ENCODE measurements at regions of chr1 and their contacts with region 1.

Region 1: DNA sequence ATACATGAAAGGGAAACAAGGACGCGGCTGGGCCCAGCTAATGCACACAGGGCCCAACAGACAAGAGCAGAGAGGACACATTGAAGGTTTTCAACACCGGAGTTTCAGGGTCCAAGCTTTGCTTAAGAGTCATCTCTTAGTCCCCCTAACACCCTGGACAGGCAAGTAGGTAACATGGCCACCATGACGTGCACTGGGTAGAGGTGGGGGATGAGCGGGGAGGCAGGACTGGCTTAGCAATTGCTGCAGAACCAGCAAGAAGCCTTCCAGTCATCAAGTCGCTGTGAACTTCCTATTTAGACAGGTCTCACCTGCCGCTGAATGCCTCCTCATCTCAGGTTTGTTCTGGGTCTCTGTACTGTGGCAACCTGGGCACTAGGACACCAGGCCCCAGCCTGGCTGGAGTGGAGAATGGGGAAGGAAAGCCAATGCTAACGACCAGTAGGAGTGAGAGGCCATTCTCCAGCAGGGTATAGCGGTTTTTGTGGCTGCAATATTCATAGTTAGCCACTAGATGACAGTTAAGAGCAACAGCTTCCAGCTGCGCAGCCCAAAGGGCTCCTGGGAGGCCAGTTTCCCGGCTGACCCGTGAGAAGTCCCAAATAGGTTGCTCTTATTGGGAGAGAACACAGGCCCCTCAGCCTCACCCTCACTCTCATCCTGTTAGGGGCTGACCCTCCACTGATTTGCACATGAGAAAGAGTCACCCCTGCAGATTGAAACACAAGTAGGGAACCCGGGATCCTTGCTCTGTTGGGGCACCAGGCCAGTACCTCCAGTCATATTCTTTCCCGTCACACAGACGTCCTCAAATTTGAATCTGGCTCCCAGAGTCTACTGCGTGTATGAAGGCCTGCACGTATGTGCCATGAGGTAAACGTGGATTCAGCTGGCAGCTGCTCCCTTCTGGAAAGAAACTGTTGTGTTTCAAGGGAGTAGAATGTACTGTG is 6.0 kb upstream of the PIGC start:
- DNase-seq: peak; percentile 30
- H3K4me3 Mint-ChIP-seq: peak overlapping the region; percentile 43
- H3K27ac Mint-ChIP-seq: no peak overlapping the region
- H3K4me1 Mint-ChIP-seq: peaks cover 40% of the 10 kb centered on the region
- H3K27me3 Mint-ChIP-seq: peaks cover 2% of the 10 kb centered on the region

Region 2: DNA sequence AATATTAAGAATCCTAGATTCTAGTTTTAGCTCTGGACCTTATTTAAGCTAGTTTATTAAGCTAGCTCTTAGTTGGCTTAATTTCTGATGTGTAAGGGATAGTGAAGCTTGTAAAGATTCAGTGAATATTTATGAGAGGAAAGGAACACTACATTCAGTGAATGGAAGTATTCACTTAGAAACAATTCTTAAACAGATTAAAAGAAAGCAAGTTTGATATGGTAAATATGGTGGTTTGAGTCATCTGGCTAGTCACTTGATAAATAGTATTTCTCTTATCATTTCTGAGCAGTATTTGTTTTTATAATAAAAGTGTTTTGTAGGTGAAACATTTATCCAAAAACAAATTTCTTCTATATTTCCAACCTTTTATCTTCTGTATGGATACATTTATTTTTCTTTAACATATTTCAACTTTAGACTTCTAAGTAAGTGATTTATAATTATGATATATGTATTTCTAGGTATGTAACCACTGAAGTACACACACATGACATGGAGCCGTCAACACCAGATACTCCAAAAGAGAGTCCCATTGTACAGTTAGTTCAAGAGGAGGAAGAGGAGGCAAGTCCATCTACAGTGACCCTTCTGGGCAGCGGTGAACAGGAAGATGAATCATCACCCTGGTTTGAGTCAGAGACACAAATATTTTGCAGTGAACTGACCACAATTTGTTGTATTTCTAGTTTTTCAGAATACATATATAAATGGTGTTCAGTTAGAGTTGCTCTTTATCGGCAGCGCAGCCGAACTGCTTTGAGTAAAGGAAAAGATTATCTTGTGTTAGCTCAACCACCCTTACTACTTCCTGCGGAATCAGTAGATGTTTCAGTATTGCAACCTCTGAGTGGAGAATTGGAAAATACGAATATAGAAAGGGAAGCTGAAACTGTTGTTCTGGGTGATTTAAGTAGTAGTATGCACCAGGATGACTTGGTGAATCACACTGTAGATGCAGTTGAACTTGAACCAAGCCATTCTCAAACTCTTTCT is 138.7 kb after region 1 on chr1:
- intact Hi-C with region 1: loop called (anchors 5 kb)
- DNase-seq: no peak
- H3K4me3 Mint-ChIP-seq: peak overlapping the region; percentile 32
- H3K27ac Mint-ChIP-seq: peak overlapping the region; percentile 83
- H3K4me1 Mint-ChIP-seq: peaks cover 20% of the 10 kb centered on the region
- H3K27me3 Mint-ChIP-seq: no peaks in the 10 kb centered on the region

Region 3: DNA sequence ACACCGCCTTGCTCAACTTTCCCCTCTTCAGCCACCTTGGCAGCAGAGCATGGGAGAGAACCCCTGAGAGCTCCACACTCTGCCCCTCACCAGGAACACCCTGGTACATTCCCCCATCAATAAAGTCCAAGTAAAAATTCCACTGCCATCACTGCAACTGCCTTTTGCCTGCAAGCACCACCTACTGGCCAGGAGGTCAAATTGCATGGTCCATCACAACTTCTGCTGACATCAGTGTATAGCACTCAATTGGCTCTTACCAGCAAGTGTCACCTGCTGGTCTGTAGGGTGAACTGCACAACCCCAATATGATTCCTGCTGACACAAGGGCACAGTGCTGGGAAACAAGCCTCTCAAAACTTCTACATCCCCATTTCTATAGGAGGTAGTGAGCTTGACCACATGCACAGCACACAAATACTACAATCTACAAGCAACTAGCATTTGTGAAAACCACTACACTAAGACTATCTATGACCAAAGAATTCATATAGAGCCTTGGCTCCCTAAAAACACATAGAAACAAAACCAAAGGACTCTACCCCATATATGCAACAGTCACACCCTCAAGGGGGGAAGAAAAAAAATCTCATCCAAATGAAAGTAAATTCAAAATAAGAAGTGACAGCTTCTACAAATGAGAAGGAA is 278.2 kb after region 1 on chr1:
- intact Hi-C with region 1: loop called (anchors 1 kb)
- DNase-seq: peak; percentile 37
- H3K4me3 Mint-ChIP-seq: no peak overlapping the region
- H3K27ac Mint-ChIP-seq: no peak overlapping the region
- H3K4me1 Mint-ChIP-seq: peaks cover 18% of the 10 kb centered on the region
- H3K27me3 Mint-ChIP-seq: peaks cover 15% of the 10 kb centered on the region